AG04450 (cell line): ENCODE measurements at regions of chr3 and their contacts with region 1.

Region 1: DNA sequence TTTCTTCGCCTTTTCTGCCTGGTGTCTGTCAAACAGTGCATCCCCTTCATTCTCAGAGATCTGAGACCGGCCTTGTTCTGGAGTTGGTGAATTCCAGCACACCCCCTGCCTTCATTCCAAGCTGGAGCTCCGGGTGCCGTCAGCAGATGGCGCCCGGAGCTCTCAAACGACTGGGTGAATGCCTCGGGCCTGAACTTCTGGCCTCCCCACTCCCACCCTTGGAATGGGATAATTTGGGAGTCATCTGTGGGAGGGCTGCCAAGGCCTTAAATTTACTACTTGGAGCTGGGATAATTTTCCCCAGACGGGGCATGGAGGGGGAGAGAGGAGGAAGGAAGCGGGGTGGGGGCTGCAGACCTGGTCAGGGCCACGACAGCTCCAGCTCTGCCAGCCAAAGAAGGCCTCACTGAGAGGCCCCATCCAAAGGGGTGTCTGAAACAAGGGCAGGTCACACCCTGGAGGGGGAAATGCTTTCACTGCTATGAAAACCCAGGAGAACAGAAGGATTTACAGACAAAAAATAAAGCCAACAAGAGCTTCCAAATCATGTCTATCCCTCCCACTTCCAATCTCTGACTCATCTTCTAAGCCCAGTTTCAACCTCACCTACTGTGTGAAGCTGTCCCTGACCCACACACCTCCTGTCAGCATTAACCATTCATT is 187.9 kb downstream of the OPA1 start:
- DNase-seq: peak; percentile 27
- H3K4me3 ChIP-seq: no peak overlapping the region
- H3K27ac ChIP-seq: peak overlapping the region; percentile 11
- H3K27me3 ChIP-seq: peaks cover 61% of the 10 kb centered on the region
- CTCF ChIP-seq: peak; percentile 87

Region 2: DNA sequence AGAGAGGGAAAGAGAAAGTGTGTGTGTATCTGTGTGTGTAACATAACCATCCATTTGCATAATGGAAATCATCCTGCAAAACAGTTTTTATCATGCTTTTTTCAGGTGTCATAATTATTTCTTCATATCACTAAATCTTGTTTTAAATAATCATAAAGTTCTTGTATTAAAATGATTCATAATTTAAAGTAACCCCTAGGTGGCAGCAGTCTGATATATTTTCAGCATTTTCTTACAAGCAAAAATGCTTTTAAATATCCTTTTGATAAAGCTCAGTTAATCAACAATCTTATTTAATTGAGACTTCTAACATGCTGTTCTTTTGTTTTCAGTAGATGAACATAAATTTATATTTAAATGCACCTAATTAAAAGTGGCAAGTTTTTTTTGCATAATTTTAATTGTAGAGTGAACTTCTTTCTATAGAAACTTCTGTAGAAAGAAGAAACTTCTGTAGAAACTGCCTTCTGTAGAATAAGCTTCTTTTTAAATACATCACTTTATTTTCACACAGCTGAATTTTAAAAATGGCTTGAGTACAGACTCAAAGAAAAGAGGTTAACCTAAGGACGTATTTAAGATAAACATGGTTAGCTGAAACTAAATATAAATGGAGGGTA is 115.5 kb before region 1 on chr3:
- CTCF ChIA-PET with region 1: interaction called, 10 read pairs
- POLR2A ChIA-PET with region 1: no interaction called
- DNase-seq: peak; percentile 4
- H3K4me3 ChIP-seq: no peak overlapping the region
- H3K27ac ChIP-seq: no peak overlapping the region
- H3K27me3 ChIP-seq: no peaks in the 10 kb centered on the region
- CTCF ChIP-seq: peak; percentile 50

Region 3: DNA sequence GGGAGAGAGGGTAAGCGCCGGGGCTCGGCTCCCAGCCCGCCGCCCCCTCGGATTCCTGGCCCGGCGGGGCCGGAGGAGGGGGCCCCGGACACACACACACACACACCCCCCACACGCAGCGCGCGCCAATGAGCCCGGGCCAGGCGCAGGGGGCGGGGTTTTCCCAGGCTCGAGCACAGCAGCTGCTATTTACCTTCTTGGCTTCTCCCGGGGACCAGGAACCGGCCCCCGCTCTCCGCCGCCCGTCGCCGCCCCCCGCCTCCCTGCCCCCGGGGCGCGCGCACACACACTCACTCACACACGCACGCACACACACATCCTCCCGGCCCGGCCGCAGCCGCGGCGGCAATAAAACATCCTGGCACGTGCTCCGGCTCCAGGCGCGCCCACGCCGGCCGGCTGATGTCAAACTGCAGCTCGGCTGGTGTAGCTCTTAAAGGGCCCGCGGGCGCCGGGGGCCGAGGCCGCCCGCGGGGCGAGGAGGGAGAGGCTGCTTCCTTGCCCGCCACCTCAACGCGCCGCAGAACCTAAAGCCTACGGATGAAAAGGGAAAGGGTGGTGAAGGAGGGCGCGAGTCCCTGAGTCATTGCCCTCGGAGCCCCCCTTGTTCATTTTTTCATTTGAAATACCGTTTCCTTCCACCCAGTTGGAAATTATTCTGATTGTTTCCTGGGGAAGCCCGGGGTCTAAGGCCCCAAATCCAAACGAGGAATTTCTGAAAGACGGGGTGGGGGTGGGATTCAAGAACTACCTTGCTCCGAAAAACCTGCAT is 354.0 kb after region 1 on chr3:
- CTCF ChIA-PET with region 1: interaction called, 18 read pairs
- POLR2A ChIA-PET with region 1: no interaction called
- DNase-seq: peak; percentile 85
- H3K4me3 ChIP-seq: peak overlapping the region; percentile 61
- H3K27ac ChIP-seq: peak overlapping the region; percentile 95
- H3K27me3 ChIP-seq: peaks cover 28% of the 10 kb centered on the region
- CTCF ChIP-seq: no peak

Region 4: DNA sequence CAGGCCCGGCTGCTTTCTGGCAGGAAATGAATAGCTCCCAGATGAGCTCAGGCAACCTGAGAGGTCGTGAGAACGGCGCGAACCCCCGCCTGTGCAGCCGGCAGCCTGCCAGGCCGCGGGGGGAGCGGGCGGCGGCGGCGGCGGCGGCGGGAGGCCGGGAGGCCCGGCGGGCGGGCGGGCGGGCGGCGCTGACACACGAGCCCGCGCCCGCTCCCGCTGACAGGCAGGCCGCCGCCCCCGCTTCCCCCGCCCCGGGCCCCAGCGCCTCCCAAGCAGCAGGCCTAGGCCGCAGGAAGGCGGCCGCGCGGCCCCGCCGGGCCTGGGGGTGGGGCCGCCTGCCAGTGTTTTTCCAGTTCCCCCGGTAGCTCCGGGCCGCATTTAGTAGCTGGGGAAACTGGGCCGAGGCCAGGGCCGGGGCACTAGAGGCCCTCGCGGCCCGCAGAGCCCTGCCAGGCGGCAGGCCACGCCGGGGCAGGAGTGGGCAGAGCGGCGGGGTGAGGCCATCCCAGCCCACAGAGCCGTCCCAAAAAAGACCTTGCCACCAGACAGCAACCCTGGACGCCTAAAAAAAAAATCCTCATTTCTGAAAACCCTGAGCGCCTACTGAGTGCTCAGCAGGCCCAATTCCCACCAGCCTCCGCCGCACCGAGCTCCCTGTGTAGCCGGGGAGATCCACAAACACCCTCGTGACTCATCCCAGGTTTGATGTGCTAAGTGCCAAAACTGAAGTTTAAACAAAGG is 360.6 kb after region 1 on chr3:
- CTCF ChIA-PET with region 1: interaction called, 18 read pairs
- POLR2A ChIA-PET with region 1: no interaction called
- DNase-seq: peak; percentile 69
- H3K4me3 ChIP-seq: peak overlapping the region; percentile 47
- H3K27ac ChIP-seq: peak overlapping the region; percentile 71
- H3K27me3 ChIP-seq: peaks cover 6% of the 10 kb centered on the region
- CTCF ChIP-seq: no peak

Region 5: DNA sequence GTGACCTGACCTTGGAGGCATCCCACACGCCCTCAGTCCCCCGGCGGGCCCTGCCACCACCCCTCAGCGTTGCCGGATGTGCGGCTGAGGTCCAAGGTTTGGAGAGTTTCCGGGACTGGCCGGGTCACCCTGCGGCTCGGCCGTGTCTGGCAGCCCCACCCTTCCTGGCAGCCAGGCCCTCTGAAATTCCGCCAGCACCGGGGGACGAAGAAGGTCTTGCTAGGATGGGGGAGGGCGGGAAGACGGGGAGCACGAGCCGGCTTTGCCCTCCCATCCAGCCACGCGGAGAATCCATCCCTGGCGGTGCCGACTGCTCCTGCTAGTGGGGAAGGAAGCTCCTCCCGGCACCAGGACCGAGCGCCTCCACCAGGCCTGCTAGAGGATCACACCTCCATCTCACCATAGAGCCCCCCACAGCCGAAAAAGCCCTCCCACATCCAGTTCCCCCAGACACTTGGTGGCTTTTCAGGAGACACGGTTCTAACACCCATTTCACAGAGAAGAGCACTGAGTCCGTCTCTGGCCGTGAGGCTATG is 488.7 kb after region 1 on chr3:
- CTCF ChIA-PET with region 1: interaction called, 10 read pairs
- POLR2A ChIA-PET with region 1: no interaction called
- DNase-seq: no peak
- H3K4me3 ChIP-seq: no peak overlapping the region
- H3K27ac ChIP-seq: no peak overlapping the region
- H3K27me3 ChIP-seq: peaks cover 8% of the 10 kb centered on the region
- CTCF ChIP-seq: peak; percentile 46

Region 6: GRCh38 chr3:194306109-194306686 is 525.3 kb after region 1 on chr3:
- CTCF ChIA-PET with region 1: interaction called, 280 read pairs
- POLR2A ChIA-PET with region 1: no interaction called
- DNase-seq: no peak
- H3K4me3 ChIP-seq: no peak overlapping the region
- H3K27ac ChIP-seq: no peak overlapping the region
- H3K27me3 ChIP-seq: peaks cover 73% of the 10 kb centered on the region
- CTCF ChIP-seq: no peak